GM12878 (cell line): ENCODE measurements at regions of chr7 and their contacts with region 1.

Region 1: GRCh38 chr7:7681179-7681935 is 37.0 kb downstream of the RPA3 start:
- DNase-seq: peak; percentile 56
- ATAC-seq: peak; percentile 97
- H3K4me3 ChIP-seq: no peak overlapping the region
- H3K27ac ChIP-seq: no peak overlapping the region
- H3K4me1 ChIP-seq: peaks cover 3% of the 10 kb centered on the region; the same call in 1 of the 2 replicates
- H3K27me3 ChIP-seq: no peaks in the 10 kb centered on the region
- CTCF ChIP-seq: peak; percentile 44 to 67 (median 52); a peak in 5 of 6 replicates
- EP300 ChIP-seq: no peak
- POLR2A ChIP-seq: no peak
- RAD21 ChIP-seq: peak; percentile 86

Region 2: DNA sequence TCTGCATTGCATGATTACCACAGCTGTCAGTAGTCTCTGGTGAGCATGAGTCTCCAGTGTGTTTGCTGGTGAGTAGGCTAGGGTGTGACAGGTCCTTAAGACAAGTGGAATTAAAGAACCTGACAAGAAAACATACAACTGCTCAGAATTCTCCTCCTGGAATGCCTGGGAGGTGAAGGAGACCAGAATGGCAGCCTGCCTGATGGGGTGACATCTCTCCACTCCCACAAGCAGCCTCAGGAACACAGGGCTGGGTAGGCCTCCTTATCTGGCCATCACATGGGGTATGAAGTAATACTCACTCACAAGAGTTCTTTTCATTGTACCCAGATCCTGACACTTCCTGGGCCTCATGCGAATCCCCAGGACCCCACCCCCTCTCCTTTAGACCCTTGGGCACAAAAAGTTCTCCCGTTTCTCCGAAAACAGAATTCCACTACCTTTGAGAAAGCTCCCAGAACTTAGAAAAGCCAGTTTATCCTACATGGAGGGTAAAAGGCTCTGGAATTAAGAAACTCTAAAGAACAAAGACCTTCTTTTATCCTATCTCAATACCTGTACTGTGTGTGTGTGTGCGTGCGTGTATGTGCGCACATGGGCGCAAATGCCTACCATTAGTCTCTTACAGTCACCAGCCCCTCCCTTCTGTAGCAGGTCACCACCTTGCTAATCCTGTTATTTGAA is 532.4 kb before region 1 on chr7:
- CTCF ChIA-PET with region 1: no interaction called
- POLR2A ChIA-PET with region 1: no interaction called
- RAD21 ChIA-PET with region 1: no interaction called
- SMC1A ChIA-PET with region 1: no interaction called
- in situ Hi-C with region 1: no loop called
- intact Hi-C with region 1: no loop called
- DNase-seq: no peak
- ATAC-seq: no peak
- H3K4me3 ChIP-seq: no peak overlapping the region
- H3K27ac ChIP-seq: no peak overlapping the region
- H3K4me1 ChIP-seq: no peaks in the 10 kb centered on the region
- H3K27me3 ChIP-seq: no peaks in the 10 kb centered on the region
- CTCF ChIP-seq: no peak
- EP300 ChIP-seq: no peak
- POLR2A ChIP-seq: no peak
- RAD21 ChIP-seq: no peak

Region 3: GRCh38 chr7:7354659-7355058 is 326.7 kb before region 1 on chr7:
- CTCF ChIA-PET with region 1: no interaction called
- POLR2A ChIA-PET with region 1: no interaction called
- RAD21 ChIA-PET with region 1: no interaction called
- SMC1A ChIA-PET with region 1: no interaction called
- in situ Hi-C with region 1: no loop called
- intact Hi-C with region 1: no loop called
- DNase-seq: no peak
- ATAC-seq: no peak
- H3K4me3 ChIP-seq: no peak overlapping the region
- H3K27ac ChIP-seq: no peak overlapping the region
- H3K4me1 ChIP-seq: no peaks in the 10 kb centered on the region
- H3K27me3 ChIP-seq: no peaks in the 10 kb centered on the region
- CTCF ChIP-seq: no peak
- EP300 ChIP-seq: no peak
- POLR2A ChIP-seq: no peak
- RAD21 ChIP-seq: no peak

Region 4: DNA sequence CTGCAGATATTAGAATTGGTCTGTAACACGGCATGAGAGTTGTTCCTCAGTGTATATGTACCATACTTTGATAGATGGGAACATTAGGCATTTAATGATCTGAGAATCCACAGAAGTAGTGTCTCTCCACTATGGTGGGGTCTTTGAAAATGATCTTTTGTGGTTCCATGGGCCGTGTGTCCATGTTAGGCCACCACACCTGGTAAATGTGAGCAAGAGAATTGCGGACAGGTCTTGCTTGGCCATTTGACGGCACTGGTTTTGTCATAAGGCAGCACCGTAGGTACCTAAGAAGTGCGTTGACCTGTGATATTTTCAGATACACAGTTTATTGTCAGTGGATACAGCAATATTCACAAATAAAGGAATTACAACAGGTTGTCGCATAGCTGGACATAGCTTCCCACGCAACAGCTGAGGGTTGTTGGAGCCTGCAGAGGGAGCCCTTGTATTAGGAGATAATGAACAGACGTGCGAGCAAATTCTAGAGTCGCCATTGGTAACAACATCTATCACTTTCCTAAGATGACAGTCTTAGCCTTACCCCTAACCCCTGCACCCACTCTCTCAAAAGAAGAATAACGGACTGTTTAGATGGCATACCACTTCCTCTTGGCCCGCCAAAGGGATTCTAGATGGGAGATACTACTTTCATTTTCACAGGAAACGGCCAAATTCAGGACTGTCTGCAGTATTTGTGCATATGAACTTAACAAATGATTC is 257.0 kb before region 1 on chr7:
- CTCF ChIA-PET with region 1: interaction called, 10 read pairs
- POLR2A ChIA-PET with region 1: no interaction called
- RAD21 ChIA-PET with region 1: interaction called, 8 read pairs
- SMC1A ChIA-PET with region 1: interaction called, 12 read pairs
- in situ Hi-C with region 1: no loop called
- intact Hi-C with region 1: no loop called
- DNase-seq: peak; percentile 37
- ATAC-seq: peak; percentile 92
- H3K4me3 ChIP-seq: peak overlapping the region; percentile 41
- H3K27ac ChIP-seq: no peak overlapping the region
- H3K4me1 ChIP-seq: no peaks in the 10 kb centered on the region
- H3K27me3 ChIP-seq: no peaks in the 10 kb centered on the region
- CTCF ChIP-seq: peak; percentile 66 to 75 (median 66)
- EP300 ChIP-seq: no peak
- POLR2A ChIP-seq: no peak
- RAD21 ChIP-seq: peak; percentile 76

Region 5: DNA sequence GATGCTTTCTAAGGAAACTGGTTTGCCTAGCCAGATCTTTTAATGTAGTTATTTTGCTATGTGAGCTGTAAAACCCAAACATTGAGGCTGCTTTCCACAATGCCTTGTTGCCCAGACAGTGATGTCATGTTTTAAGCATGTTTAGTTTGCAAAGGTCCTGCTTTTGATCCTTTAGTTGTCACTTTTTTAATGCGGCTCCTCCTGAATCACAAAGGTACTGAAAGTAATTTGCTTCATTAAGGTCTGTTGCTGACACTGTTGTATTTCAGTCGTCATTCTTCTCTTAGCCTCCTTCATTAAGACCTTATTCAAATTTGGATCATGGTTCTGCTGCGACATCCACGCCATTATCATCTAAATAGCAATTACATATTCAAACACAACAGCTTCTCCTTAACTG is 26.4 kb after region 1 on chr7:
- CTCF ChIA-PET with region 1: interaction called, 7 read pairs
- POLR2A ChIA-PET with region 1: no interaction called
- RAD21 ChIA-PET with region 1: interaction called, 22 read pairs
- SMC1A ChIA-PET with region 1: interaction called, 42 read pairs
- in situ Hi-C with region 1: no loop called
- intact Hi-C with region 1: no loop called
- DNase-seq: no peak
- ATAC-seq: no peak
- H3K4me3 ChIP-seq: no peak overlapping the region
- H3K27ac ChIP-seq: no peak overlapping the region
- H3K4me1 ChIP-seq: peaks cover 15% of the 10 kb centered on the region; the same call in 1 of the 2 replicates
- H3K27me3 ChIP-seq: no peaks in the 10 kb centered on the region
- CTCF ChIP-seq: no peak
- EP300 ChIP-seq: no peak
- POLR2A ChIP-seq: no peak
- RAD21 ChIP-seq: no peak

Region 6: DNA sequence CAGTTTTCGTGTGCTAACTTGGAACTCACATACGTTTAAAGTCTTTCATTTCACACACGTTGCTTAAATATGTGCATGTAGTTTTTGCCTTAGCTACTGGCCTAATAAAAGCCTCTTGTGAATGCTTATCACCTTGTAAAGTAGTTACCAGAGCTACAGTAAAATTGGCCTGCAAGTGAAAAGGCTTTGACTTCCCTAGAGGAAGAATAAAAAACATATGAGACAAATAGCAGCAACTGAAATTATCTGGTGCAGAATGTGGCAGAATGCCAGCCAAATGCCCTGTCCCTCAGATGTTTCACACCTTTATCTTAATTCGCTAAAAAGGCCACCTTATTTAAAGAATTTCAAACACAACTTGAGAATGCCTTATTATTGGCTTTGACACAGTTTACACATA is 65.1 kb after region 1 on chr7:
- CTCF ChIA-PET with region 1: interaction called, 16 read pairs
- POLR2A ChIA-PET with region 1: no interaction called
- RAD21 ChIA-PET with region 1: interaction called, 30 read pairs
- SMC1A ChIA-PET with region 1: interaction called, 19 read pairs
- in situ Hi-C with region 1: no loop called
- intact Hi-C with region 1: no loop called
- DNase-seq: no peak
- ATAC-seq: no peak
- H3K4me3 ChIP-seq: no peak overlapping the region
- H3K27ac ChIP-seq: no peak overlapping the region
- H3K4me1 ChIP-seq: no peaks in the 10 kb centered on the region
- H3K27me3 ChIP-seq: no peaks in the 10 kb centered on the region
- CTCF ChIP-seq: no peak
- EP300 ChIP-seq: no peak
- POLR2A ChIP-seq: no peak
- RAD21 ChIP-seq: no peak

Region 7: GRCh38 chr7:7920481-7920880 is 239.1 kb after region 1 on chr7:
- CTCF ChIA-PET with region 1: interaction called, 10 read pairs
- POLR2A ChIA-PET with region 1: no interaction called
- RAD21 ChIA-PET with region 1: interaction called, 19 read pairs
- SMC1A ChIA-PET with region 1: interaction called, 19 read pairs
- in situ Hi-C with region 1: no loop called
- intact Hi-C with region 1: no loop called
- DNase-seq: peak; percentile 76
- ATAC-seq: peak; percentile 93
- H3K4me3 ChIP-seq: no peak overlapping the region; the same call in 1 of the 2 replicates
- H3K27ac ChIP-seq: no peak overlapping the region; the same call in 1 of the 2 replicates
- H3K4me1 ChIP-seq: peaks cover 50% of the 10 kb centered on the region
- H3K27me3 ChIP-seq: no peaks in the 10 kb centered on the region
- CTCF ChIP-seq: no peak
- EP300 ChIP-seq: peak; percentile 82 to 91; a peak in 2 of 4 replicates
- POLR2A ChIP-seq: no peak
- RAD21 ChIP-seq: peak; percentile 11; the same call in 1 of the 2 replicates

Region 8: GRCh38 chr7:8035647-8036518 is 354.5 kb after region 1 on chr7:
- CTCF ChIA-PET with region 1: interaction called, 9 read pairs
- POLR2A ChIA-PET with region 1: no interaction called
- RAD21 ChIA-PET with region 1: interaction called, 10 read pairs
- SMC1A ChIA-PET with region 1: interaction called, 8 read pairs
- in situ Hi-C with region 1: no loop called
- intact Hi-C with region 1: loop called (anchors 5 kb)
- DNase-seq: peak; percentile 23
- ATAC-seq: peak; percentile 88
- H3K4me3 ChIP-seq: no peak overlapping the region
- H3K27ac ChIP-seq: no peak overlapping the region
- H3K4me1 ChIP-seq: no peaks in the 10 kb centered on the region
- H3K27me3 ChIP-seq: no peaks in the 10 kb centered on the region
- CTCF ChIP-seq: peak in 2 of 3 experiments; percentile 50 to 57; a peak in 4 of 6 replicates
- EP300 ChIP-seq: no peak
- POLR2A ChIP-seq: no peak
- RAD21 ChIP-seq: peak; percentile 38

Region 9: DNA sequence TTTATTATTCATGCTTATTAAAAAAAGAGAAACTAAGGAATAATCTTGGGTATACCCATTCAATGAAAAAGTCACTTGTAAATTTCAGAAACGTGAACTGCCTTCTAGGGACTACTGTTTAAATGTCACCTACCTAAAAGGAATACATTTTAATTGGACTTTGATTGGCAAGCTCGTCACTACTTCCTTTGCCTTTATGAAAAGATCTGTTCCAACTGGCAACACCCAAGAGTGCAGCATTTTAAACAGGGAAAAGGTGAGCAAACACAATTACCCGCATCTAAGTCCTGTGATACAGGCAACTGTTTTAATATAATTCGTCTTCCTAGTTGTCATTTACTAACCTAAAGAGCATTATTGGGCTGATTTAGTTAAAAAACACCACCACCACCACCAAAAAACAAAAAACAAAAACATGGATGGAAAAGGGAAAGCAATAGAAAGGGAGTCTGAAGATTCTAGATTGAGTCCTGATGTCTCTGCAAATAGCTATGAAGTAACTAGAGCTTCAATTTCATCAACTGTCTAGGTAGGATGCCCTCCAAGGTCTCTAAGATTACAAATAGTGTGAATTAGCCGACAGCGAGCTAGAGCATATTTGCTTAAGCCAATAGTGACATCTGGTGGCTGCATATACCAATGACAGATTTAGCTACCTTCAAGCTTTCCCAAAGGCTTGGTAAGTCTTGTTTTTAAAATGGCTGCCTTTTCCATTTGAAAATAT is 614.4 kb after region 1 on chr7:
- CTCF ChIA-PET with region 1: interaction called, 26 read pairs
- POLR2A ChIA-PET with region 1: no interaction called
- RAD21 ChIA-PET with region 1: interaction called, 19 read pairs
- SMC1A ChIA-PET with region 1: interaction called, 21 read pairs
- in situ Hi-C with region 1: no loop called
- intact Hi-C with region 1: no loop called
- DNase-seq: peak; percentile 43
- ATAC-seq: peak; percentile 99
- H3K4me3 ChIP-seq: no peak overlapping the region
- H3K27ac ChIP-seq: no peak overlapping the region
- H3K4me1 ChIP-seq: no peaks in the 10 kb centered on the region
- H3K27me3 ChIP-seq: no peaks in the 10 kb centered on the region
- CTCF ChIP-seq: peak; percentile 64 to 90 (median 75)
- EP300 ChIP-seq: no peak
- POLR2A ChIP-seq: no peak
- RAD21 ChIP-seq: peak; percentile 92